ENCODE measurements at regions of chr11 and their contacts with region 1.

Region 1: GRCh38 chr11:34357701-34358257 is at the start of gene ABTB2:
- DNase-seq: peak; percentile 94
- ATAC-seq: peak; percentile 84
- H3K4me3 ChIP-seq: peak within 1 kb of the TSS; percentile 76 to 93 (median 91)
- H3K27ac ChIP-seq: peak within 1 kb of the TSS; percentile 83
- H3K4me1 ChIP-seq: peaks cover 55% of the 10 kb centered on the region
- H3K27me3 ChIP-seq: no peaks in the 10 kb centered on the region; a peak in 1 of 5 replicates
- CTCF ChIP-seq: no peak
- EP300 ChIP-seq: no peak
- POLR2A ChIP-seq: peak; percentile 90 to 95
- RAD21 ChIP-seq: no peak; the same call in 1 of the 2 replicates
- total RNA-seq, gene ABTB2: 5.1 TPM in 2 replicates

Region 2: DNA sequence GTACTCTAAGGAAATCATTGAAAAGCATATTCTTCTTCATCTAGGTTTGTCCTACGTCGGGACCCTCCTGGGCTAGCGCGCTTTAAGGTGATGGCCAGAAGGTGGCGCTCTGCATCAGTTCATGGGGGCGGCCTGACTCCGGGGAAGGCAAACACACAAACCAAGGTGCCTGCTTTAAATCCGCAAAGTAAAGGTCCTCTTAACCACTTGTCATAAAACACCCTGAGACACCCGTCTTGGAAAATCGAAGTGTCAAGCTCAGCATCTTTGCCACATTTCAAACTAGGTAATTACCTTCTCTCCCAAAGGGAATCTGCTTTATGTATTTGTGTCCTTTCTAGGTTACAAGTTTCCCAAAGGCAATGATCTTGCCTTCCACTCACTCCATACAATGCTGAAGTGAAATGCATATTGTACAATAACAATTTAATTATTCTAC is 499.8 kb before region 1 on chr11:
- CTCF ChIA-PET with region 1: no interaction called
- POLR2A ChIA-PET with region 1: no interaction called
- in situ Hi-C with region 1: loop called (anchors 25 kb)
- intact Hi-C with region 1: no loop called
- DNase-seq: peak; percentile 31
- ATAC-seq: peak; percentile 88
- H3K4me3 ChIP-seq: no peak overlapping the region
- H3K27ac ChIP-seq: no peak overlapping the region
- H3K4me1 ChIP-seq: no peaks in the 10 kb centered on the region
- H3K27me3 ChIP-seq: peaks cover 5 to 52% of the 10 kb centered on the region in 2 experiments
- CTCF ChIP-seq: peak; percentile 86
- EP300 ChIP-seq: no peak
- POLR2A ChIP-seq: no peak
- RAD21 ChIP-seq: peak; percentile 77

Region 3: GRCh38 chr11:34174412-34175041 is 183.3 kb before region 1 on chr11:
- CTCF ChIA-PET with region 1: interaction called, 169 read pairs
- POLR2A ChIA-PET with region 1: interaction called, 51 read pairs
- in situ Hi-C with region 1: loop called (anchors 5 kb)
- intact Hi-C with region 1: loop called (anchors 1 kb)
- DNase-seq: peak; percentile 43
- ATAC-seq: peak; percentile 99
- H3K4me3 ChIP-seq: peak overlapping the region in 1 of 3 experiments; percentile 41; a peak in 1 of 6 replicates
- H3K27ac ChIP-seq: no peak overlapping the region
- H3K4me1 ChIP-seq: peaks cover 7% of the 10 kb centered on the region; the same call in 1 of the 2 replicates
- H3K27me3 ChIP-seq: no peaks in the 10 kb centered on the region
- CTCF ChIP-seq: peak; percentile 99
- EP300 ChIP-seq: 0 out of 4 replicates have a peak, but pooled peaks of 1 of the 2 experiments have one; percentile 19
- POLR2A ChIP-seq: no peak
- RAD21 ChIP-seq: peak; percentile 100

Region 4: DNA sequence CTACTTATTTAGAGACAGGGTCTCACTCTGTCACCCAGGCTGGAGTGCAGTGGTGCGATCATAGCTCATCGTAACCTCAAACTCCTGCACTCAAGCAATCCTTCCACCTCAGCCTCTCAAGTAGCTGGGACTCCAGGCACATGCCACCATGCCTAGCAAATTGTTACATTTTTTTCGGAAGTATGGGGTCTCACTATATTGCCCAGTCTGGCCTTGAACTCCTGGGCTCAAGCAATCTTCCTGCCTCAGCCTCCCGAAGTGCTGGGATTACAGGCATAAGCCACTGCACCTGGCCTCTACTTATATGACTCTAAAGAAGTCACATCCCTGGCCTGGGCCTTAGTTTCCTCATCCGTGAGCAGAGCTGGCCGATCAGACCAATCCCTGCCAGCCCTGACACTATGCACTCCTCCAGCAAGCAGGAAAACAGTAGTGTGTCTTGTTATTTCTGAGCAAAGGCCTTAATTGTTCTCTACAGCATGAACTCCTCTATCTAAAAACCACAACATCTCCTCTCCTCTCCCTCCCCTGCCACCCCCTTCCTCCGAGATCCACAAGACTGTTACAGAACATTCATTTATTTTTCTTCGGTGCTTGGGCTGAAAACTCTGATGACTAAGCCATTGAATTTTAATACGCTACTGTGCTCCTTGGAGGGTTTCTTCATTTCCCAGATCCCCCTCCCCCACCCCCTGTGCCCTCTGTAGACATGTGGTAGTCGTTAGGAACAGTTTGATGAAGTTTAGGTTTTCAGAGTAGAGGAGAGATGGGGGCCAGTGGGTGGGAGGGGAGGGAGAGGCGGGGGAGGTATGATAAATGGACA is 91.5 kb before region 1 on chr11:
- CTCF ChIA-PET with region 1: no interaction called
- POLR2A ChIA-PET with region 1: interaction called, 4 read pairs
- in situ Hi-C with region 1: no loop called
- intact Hi-C with region 1: loop called (anchors 5 kb)
- DNase-seq: no peak
- ATAC-seq: peak; percentile 34
- H3K4me3 ChIP-seq: no peak overlapping the region
- H3K27ac ChIP-seq: peak overlapping the region; percentile 36
- H3K4me1 ChIP-seq: peaks cover 94% of the 10 kb centered on the region
- H3K27me3 ChIP-seq: no peaks in the 10 kb centered on the region
- CTCF ChIP-seq: no peak
- EP300 ChIP-seq: no peak
- POLR2A ChIP-seq: no peak
- RAD21 ChIP-seq: no peak

Region 5: DNA sequence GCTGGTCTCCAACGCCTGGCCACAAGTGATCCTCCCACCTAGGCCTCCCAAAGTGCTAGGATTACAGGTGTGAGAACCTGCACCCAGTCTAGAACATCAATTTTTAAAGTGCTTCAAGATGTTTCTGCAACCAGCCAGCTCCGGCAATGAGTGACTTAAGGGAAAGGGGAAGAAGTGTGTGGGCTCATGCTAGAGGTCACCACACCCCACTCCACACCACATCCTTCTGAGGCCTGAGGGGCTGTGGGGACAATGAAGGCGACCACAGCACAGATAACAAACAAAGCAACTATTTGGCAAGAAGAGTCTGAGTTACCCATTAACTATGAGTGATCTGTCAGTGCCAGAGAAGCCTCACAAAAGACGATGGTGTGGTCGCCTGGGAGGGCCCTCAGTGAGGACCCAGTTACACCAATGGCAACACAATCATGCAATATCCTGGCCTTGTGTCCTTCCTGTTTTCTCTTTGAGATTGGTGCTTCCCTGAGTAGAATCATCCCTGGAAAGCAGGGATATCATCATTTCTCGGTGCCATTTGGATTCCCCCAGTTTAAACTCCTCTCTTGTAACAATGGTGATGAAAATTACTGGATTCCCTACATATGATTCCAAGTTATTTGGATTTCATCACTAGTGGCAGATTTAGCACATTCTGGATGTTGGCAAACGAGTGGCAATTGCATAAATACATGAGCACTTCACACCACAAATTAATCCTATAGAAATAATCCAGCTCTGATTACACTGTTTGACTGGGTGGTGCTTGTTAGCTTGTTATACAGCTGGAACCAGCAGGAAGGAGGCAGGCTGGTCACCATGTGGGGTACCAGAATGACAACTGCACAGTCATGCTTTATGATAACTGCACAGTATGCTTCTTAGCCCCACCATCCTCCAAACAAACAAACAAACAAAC is 18.4 kb before region 1 on chr11:
- CTCF ChIA-PET with region 1: no interaction called
- POLR2A ChIA-PET with region 1: interaction called, 81 read pairs
- in situ Hi-C with region 1: no loop called
- intact Hi-C with region 1: no loop called
- DNase-seq: peak; percentile 94
- ATAC-seq: peak; percentile 99
- H3K4me3 ChIP-seq: peak overlapping the region in 1 of 3 experiments; percentile 27; a peak in 2 of 6 replicates
- H3K27ac ChIP-seq: peak overlapping the region; percentile 46
- H3K4me1 ChIP-seq: peaks cover 98% of the 10 kb centered on the region
- H3K27me3 ChIP-seq: no peaks in the 10 kb centered on the region
- CTCF ChIP-seq: no peak
- EP300 ChIP-seq: peak in 1 of 2 experiments; percentile 81; a peak in 2 of 4 replicates
- POLR2A ChIP-seq: no peak
- RAD21 ChIP-seq: no peak

Region 6: GRCh38 chr11:34468209-34468841 is 110.5 kb after region 1 on chr11:
- CTCF ChIA-PET with region 1: interaction called, 9 read pairs
- POLR2A ChIA-PET with region 1: interaction called, 14 read pairs
- in situ Hi-C with region 1: no loop called
- intact Hi-C with region 1: no loop called
- DNase-seq: peak; percentile 30
- ATAC-seq: peak; percentile 54
- H3K4me3 ChIP-seq: no peak overlapping the region
- H3K27ac ChIP-seq: no peak overlapping the region
- H3K4me1 ChIP-seq: peaks cover 16% of the 10 kb centered on the region
- H3K27me3 ChIP-seq: no peaks in the 10 kb centered on the region
- CTCF ChIP-seq: peak; percentile 72
- EP300 ChIP-seq: no peak
- POLR2A ChIP-seq: no peak
- RAD21 ChIP-seq: peak; percentile 72

Measured in HepG2 (cell line).